ENCODE measurements at regions of chr5 and their contacts with region 1.

Region 1: GRCh38 chr5:134586866-134587524 is 45.6 kb downstream of the SAR1B start:
- DNase-seq: peak; percentile 93
- ATAC-seq: peak; percentile 92
- H3K4me3 Mint-ChIP-seq: no peak overlapping the region
- H3K27ac Mint-ChIP-seq: peak overlapping the region; percentile 43
- H3K4me1 Mint-ChIP-seq: peaks cover 9% of the 10 kb centered on the region
- H3K27me3 Mint-ChIP-seq: no peaks in the 10 kb centered on the region
- CTCF ChIP-seq: peak; percentile 97

Region 2: GRCh38 chr5:134304311-134304710 is 282.7 kb before region 1 on chr5:
- CTCF ChIA-PET with region 1: interaction called, 90 read pairs
- POLR2A ChIA-PET with region 1: interaction called, 3 read pairs
- intact Hi-C with region 1: loop called (anchors 2 kb)
- DNase-seq: no peak
- ATAC-seq: no peak
- H3K4me3 Mint-ChIP-seq: no peak overlapping the region
- H3K27ac Mint-ChIP-seq: no peak overlapping the region
- H3K4me1 Mint-ChIP-seq: peaks cover 7% of the 10 kb centered on the region
- H3K27me3 Mint-ChIP-seq: no peaks in the 10 kb centered on the region
- CTCF ChIP-seq: no peak

Region 3: DNA sequence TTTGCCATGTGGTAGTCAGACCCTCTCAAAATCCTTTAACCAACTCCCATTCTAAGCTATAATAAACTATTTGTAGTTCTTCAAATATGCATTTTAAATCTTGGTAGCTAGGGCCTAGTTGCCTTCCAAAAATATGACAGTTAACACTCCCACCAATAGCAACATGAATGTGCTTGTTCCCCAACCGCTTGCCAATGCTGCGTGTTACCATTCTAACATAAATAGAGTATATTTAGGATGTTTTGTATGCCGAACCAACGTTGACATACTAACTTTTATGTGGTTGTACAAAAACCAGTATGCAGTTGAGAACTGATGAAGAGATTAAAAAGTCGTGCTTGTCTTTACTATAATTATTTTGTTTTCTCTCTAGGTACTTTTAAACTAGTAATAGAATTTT is 206.6 kb before region 1 on chr5:
- CTCF ChIA-PET with region 1: interaction called, 20 read pairs
- POLR2A ChIA-PET with region 1: no interaction called
- intact Hi-C with region 1: no loop called
- DNase-seq: no peak
- ATAC-seq: no peak
- H3K4me3 Mint-ChIP-seq: no peak overlapping the region
- H3K27ac Mint-ChIP-seq: peak overlapping the region; percentile 70
- H3K4me1 Mint-ChIP-seq: peaks cover 47% of the 10 kb centered on the region
- H3K27me3 Mint-ChIP-seq: no peaks in the 10 kb centered on the region
- CTCF ChIP-seq: no peak

Region 4: DNA sequence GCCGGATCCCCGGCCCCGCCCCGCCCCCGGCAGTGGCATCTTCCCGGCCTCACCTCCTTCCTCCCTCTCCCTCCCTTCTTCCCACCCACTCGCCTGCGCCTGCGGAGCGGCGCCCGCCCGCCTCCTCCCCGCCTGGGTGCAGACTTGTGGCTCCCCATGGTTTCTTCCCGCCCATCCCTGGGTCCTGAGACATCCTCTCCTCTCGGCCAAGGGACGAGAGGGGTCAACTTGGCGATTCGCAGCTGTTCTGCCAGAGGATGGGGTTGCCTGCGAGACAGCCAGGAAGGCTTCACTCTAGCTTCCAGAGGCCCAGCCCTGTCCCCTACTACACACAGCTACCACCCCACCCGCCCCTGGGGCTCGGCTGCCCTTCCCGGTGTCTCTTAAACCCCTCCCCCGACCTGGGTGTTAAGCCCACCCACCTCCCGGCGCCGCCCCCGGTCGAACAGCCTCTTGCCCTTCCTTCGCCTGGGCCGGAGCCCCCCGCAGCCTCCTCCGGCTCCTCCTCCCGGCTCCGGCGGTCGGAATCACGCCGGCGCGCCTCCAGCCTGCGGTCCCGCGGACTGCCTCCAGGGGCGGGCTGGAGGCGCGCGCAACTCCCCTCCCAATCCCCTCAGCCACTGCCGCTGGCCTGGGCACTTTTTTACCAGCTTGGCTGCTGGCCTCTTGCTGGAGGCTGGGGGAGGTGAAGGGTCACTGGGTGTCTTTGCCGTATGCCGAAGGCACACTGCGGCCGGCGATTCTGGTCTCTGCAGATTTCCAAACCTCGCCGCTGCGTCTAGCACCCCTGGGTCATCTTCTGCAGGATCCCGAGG is 59.6 kb before region 1 on chr5:
- CTCF ChIA-PET with region 1: interaction called, 11 read pairs
- POLR2A ChIA-PET with region 1: interaction called, 5 read pairs
- intact Hi-C with region 1: no loop called
- DNase-seq: peak; percentile 91
- ATAC-seq: peak; percentile 66
- H3K4me3 Mint-ChIP-seq: peak overlapping the region; percentile 88
- H3K27ac Mint-ChIP-seq: peak overlapping the region; percentile 94
- H3K4me1 Mint-ChIP-seq: peaks cover 55% of the 10 kb centered on the region
- H3K27me3 Mint-ChIP-seq: no peaks in the 10 kb centered on the region
- CTCF ChIP-seq: peak; percentile 89

Region 5: DNA sequence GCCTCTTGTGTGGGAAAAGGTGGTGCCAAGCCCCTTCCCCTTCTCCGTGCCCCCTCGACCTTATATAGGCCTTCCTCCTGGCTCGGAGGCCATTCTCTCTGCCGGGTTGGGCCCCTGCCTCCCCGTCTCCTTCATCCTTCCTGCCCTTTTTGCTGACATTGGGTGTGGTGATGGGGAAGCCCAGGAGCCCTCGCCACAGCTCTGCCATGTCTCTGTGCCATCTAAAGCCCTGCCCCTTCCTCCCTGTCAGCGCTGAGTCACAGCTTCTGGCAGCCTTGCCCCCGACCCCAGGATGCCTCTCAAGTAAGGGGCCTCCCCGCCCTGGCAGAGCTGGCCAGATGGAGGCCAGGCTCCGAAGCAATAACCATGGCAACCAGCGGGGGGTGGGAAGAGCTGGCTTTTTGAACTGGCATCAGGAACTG is 31.1 kb before region 1 on chr5:
- CTCF ChIA-PET with region 1: interaction called, 12 read pairs
- POLR2A ChIA-PET with region 1: interaction called, 3 read pairs
- intact Hi-C with region 1: no loop called
- DNase-seq: peak; percentile 98
- ATAC-seq: peak; percentile 97
- H3K4me3 Mint-ChIP-seq: peak overlapping the region; percentile 75
- H3K27ac Mint-ChIP-seq: peak overlapping the region; percentile 99
- H3K4me1 Mint-ChIP-seq: peaks cover 46% of the 10 kb centered on the region
- H3K27me3 Mint-ChIP-seq: no peaks in the 10 kb centered on the region
- CTCF ChIP-seq: no peak

Region 6: DNA sequence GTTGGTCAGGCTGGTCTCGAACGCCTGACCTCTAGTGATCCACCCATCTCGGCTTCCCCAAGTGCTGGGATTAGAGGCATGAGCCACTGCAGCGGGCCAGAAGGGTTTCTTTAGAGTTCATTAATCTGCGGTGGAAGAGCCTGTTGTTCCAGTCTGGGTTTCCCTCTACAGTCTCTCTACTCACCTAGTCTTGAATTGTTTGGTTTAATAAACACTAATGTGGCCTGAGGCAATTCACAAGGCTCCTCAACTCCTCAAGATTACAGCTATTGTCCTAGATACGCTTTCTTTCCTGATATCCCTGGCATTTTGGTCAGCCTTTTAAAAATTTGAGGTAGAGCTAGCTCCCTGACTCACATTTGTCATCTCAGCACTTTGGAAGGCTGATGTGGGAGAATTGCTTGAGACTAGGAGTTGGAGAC is 50.2 kb after region 1 on chr5:
- CTCF ChIA-PET with region 1: interaction called, 10 read pairs
- POLR2A ChIA-PET with region 1: no interaction called
- intact Hi-C with region 1: no loop called
- DNase-seq: no peak
- ATAC-seq: no peak
- H3K4me3 Mint-ChIP-seq: no peak overlapping the region
- H3K27ac Mint-ChIP-seq: no peak overlapping the region
- H3K4me1 Mint-ChIP-seq: peaks cover 5% of the 10 kb centered on the region
- H3K27me3 Mint-ChIP-seq: no peaks in the 10 kb centered on the region
- CTCF ChIP-seq: no peak

Measured in activated CD8-positive, alpha-beta T cell treated with anti-CD3 and anti-CD28 coated beads for 36 hours (primary cell).